ENCODE measurements at regions of chr9 and their contacts with region 1.

Region 1: DNA sequence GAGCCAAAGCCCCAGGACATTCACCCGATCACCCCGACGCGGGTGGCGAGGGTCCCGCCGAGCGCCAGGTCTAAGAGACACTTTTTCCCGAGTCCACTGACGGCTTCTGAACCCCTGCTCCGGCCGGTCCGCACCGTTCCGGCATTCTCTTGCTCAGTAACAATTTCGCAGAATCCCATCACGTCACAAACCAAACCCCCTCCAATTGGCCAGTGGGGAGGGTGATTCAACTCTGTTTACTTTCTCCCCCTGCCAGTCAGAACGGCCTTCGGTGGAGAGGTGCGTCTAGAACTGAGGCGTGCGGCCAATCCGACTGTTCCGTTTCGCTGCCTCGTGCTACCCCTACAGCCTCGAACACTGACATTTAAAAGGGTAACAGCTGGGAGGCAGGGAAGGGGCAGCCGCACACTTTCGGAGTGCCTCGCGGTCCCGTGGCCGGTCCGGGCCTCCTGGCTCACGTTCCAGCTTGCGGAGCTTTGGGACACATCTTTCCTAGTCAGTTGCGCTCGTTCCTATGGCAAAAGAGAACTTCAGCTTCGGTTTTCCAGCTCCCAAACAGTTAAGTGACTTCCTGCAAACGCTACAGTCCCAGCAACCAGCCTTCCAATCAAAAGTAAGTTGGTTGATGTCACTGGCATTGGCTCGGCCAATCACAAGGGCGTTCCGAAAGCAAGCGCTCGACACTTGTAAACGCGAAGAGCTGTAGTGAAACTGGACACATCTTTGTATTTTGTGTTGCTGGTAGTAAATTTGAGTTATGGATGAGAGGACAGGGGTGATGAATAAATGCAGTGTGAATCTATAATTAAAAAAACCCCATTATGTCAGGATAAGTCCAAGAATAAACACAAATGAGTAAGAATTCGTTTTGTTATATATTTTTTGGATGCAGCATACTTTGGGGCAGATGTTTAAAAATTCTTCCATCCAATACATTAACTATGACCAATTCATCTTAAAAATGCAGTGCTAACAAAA is at the start of gene KLF9:
- DNase-seq: peak; percentile 80
- ATAC-seq: peak; percentile 72
- H3K4me3 ChIP-seq: peak within 1 kb of the TSS; percentile 81
- H3K27ac ChIP-seq: peak within 1 kb of the TSS; percentile 62
- H3K4me1 ChIP-seq: peaks cover 21% of the 10 kb centered on the region
- H3K27me3 ChIP-seq: no peaks in the 10 kb centered on the region
- CTCF ChIP-seq: no peak
- EP300 ChIP-seq: no peak
- POLR2A ChIP-seq: peak; percentile 57; the same call in 1 of the 2 replicates
- RAD21 ChIP-seq: no peak
- polyA plus RNA-seq, gene KLF9: 0.35 to 0.53 TPM

Region 2: DNA sequence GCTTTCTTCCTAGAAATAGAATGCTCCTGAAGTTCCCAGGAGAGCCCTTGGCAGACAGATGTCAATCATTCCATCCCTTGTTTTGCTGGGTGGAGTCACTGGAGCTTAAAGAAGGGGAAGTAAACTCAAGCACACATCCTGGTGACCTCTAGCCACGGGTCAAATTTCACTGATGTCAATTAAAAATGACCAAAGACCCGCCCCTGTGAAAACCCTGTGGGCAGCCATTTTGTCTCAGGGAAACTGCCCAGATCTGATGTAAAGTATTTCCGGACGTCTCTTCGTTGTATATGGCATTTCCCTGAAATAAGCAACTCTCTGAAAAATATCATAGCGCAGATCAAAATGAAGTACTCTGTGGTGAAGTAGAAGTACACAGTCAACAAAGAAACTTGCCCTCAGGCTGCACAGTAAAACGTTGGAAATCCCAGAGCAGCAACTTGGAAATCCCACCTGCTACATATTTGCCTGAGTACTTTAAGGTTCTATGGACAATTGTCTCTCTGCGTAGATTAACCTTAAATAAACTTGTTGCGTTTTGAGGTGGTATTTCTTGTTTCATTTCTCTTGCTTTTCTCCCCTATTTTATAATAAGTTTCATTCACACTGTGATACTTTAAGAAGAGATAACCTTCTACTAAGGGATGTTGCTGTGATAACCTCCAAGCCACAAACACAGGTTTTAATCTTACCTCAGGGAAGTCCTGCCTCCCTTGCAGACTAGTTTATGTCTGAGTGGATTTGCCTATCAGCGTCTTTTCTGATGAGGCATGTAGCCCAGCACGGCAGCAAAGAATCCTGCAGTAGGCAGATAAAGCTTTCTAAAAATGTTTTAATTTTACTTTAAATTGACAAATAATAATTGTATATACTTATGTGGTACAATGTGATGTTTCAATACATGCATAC is 1769.9 kb before region 1 on chr9:
- CTCF ChIA-PET with region 1: no interaction called
- POLR2A ChIA-PET with region 1: no interaction called
- RAD21 ChIA-PET with region 1: no interaction called
- SMC1A ChIA-PET with region 1: no interaction called
- in situ Hi-C with region 1: loop called (anchors 25 kb)
- intact Hi-C with region 1: no loop called
- DNase-seq: peak; percentile 63
- ATAC-seq: peak; percentile 83
- H3K4me3 ChIP-seq: peak overlapping the region; percentile 36; the same call in 1 of the 2 replicates
- H3K27ac ChIP-seq: peak overlapping the region; percentile 76
- H3K4me1 ChIP-seq: peaks cover 49% of the 10 kb centered on the region
- H3K27me3 ChIP-seq: no peaks in the 10 kb centered on the region
- CTCF ChIP-seq: no peak
- EP300 ChIP-seq: 0 out of 4 replicates have a peak, but pooled peaks have one; percentile 18 to 46
- POLR2A ChIP-seq: no peak
- RAD21 ChIP-seq: no peak

Region 3: DNA sequence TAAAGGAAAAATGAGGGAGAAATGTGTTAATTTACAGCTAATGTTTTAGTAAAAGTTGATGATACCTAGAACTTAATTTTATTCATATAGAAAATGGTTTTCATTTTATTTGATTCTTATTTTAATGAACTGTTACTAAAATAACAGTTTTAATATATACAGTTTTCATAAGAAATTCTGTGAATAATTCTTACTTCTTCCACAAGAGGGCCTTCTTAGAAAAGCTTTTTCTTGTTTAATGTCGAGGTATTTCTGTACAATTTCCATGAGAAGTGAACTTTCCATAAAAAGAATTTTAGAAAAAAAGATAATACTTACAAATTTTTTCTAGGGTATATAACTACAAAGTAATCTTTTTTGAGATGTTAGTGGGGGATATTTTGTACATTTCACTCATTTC is 73.5 kb before region 1 on chr9:
- CTCF ChIA-PET with region 1: interaction called, 12 read pairs
- POLR2A ChIA-PET with region 1: no interaction called
- RAD21 ChIA-PET with region 1: interaction called, 3 read pairs
- SMC1A ChIA-PET with region 1: interaction called, 4 read pairs
- in situ Hi-C with region 1: no loop called
- intact Hi-C with region 1: loop called (anchors 5 kb)
- DNase-seq: no peak
- ATAC-seq: no peak
- H3K4me3 ChIP-seq: no peak overlapping the region
- H3K27ac ChIP-seq: no peak overlapping the region
- H3K4me1 ChIP-seq: no peaks in the 10 kb centered on the region
- H3K27me3 ChIP-seq: no peaks in the 10 kb centered on the region
- CTCF ChIP-seq: peak in 1 of 3 experiments; percentile 33; a peak in 2 of 6 replicates
- EP300 ChIP-seq: no peak
- POLR2A ChIP-seq: no peak
- RAD21 ChIP-seq: peak; percentile 45

Region 4: GRCh38 chr9:70494221-70494620 is 80.1 kb after region 1 on chr9:
- CTCF ChIA-PET with region 1: no interaction called
- POLR2A ChIA-PET with region 1: no interaction called
- RAD21 ChIA-PET with region 1: no interaction called
- SMC1A ChIA-PET with region 1: no interaction called
- in situ Hi-C with region 1: no loop called
- intact Hi-C with region 1: no loop called
- DNase-seq: no peak
- ATAC-seq: no peak
- H3K4me3 ChIP-seq: no peak overlapping the region
- H3K27ac ChIP-seq: no peak overlapping the region
- H3K4me1 ChIP-seq: no peaks in the 10 kb centered on the region
- H3K27me3 ChIP-seq: peaks cover 0 to 2% of the 10 kb centered on the region in 2 experiments; a peak in 1 of 4 replicates
- CTCF ChIP-seq: no peak
- EP300 ChIP-seq: no peak
- POLR2A ChIP-seq: no peak
- RAD21 ChIP-seq: no peak

Region 5: GRCh38 chr9:70519912-70520724 is 106.0 kb after region 1 on chr9:
- CTCF ChIA-PET with region 1: interaction called, 4 read pairs
- POLR2A ChIA-PET with region 1: interaction called, 6 read pairs
- RAD21 ChIA-PET with region 1: interaction called, 11 read pairs
- SMC1A ChIA-PET with region 1: interaction called, 10 read pairs
- in situ Hi-C with region 1: no loop called
- intact Hi-C with region 1: no loop called
- DNase-seq: peak; percentile 51
- ATAC-seq: peak; percentile 89
- H3K4me3 ChIP-seq: peak overlapping the region; percentile 26; the same call in 1 of the 2 replicates
- H3K27ac ChIP-seq: peak overlapping the region; percentile 26; the same call in 1 of the 2 replicates
- H3K4me1 ChIP-seq: no peaks in the 10 kb centered on the region
- H3K27me3 ChIP-seq: no peaks in the 10 kb centered on the region
- CTCF ChIP-seq: no peak
- EP300 ChIP-seq: peak in 1 of 2 experiments; percentile 73; a peak in 1 of 4 replicates
- POLR2A ChIP-seq: no peak
- RAD21 ChIP-seq: no peak

Region 6: GRCh38 chr9:71911253-71912074 is 1497.4 kb after region 1 on chr9 and contains the start of gene C9orf85:
- CTCF ChIA-PET with region 1: no interaction called
- POLR2A ChIA-PET with region 1: no interaction called
- RAD21 ChIA-PET with region 1: no interaction called
- SMC1A ChIA-PET with region 1: no interaction called
- in situ Hi-C with region 1: loop called (anchors 25 kb)
- intact Hi-C with region 1: no loop called
- DNase-seq: peak; percentile 98
- ATAC-seq: peak; percentile 94
- H3K4me3 ChIP-seq: peak within 1 kb of the TSS; percentile 91
- H3K27ac ChIP-seq: peak within 1 kb of the TSS; percentile 79
- H3K4me1 ChIP-seq: peaks cover 3% of the 10 kb centered on the region
- H3K27me3 ChIP-seq: no peaks in the 10 kb centered on the region
- CTCF ChIP-seq: no peak
- EP300 ChIP-seq: no peak
- POLR2A ChIP-seq: no peak
- RAD21 ChIP-seq: no peak
- polyA plus RNA-seq, gene C9orf85: 16.6 to 16.7 TPM

Measured in GM12878 (cell line).